ENCODE measurements at regions of chr17 and their contacts with region 1.

Region 1: DNA sequence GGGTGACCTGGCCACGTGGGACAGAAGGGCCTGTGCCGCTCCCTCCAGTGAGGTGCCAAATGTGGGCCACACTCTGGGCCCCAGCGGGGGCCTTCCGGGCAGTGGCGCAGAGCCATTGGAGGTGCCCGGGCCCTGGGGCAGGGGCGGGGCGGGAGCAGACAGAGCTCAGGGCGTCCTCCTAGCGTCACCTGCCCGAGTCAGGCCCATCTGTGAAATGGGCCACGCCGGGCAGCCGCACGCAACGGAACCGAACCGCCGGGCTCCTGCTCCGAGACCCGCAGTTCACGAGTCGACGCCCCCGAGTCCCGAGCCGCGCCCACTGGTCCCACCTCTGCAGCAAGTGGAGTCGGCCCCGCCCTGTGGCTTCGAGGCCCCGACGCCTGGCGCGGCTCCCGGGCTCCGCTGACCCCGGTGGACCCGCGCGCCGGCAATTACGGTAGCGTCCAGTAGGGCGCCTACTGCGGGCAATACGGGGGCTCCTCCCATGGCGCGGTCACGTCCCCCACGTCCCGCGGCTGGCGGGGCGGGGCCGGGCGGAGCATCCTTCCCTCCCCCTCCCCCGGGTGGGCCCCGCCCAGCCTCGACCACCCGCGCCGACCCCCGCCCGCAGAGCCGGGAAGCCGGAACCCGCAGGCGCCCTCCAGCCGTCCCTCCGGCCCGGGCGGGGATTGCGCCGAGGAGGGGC is 1.9 kb downstream of the SLC16A3 start:
- DNase-seq: peak; percentile 76
- H3K4me3 Mint-ChIP-seq: peak overlapping the region; percentile 91
- H3K27ac Mint-ChIP-seq: no peak overlapping the region
- H3K4me1 Mint-ChIP-seq: peaks cover 32% of the 10 kb centered on the region
- H3K27me3 Mint-ChIP-seq: no peaks in the 10 kb centered on the region

Region 2: GRCh38 chr17:82205719-82206508 is 24.9 kb before region 1 on chr17:
- CTCF ChIA-PET with region 1: interaction called, 11 read pairs
- POLR2A ChIA-PET with region 1: interaction called, 27 read pairs
- DNase-seq: peak; percentile 86
- H3K4me3 Mint-ChIP-seq: peak overlapping the region; percentile 31
- H3K27ac Mint-ChIP-seq: peak overlapping the region; percentile 92
- H3K4me1 Mint-ChIP-seq: peaks cover 46% of the 10 kb centered on the region
- H3K27me3 Mint-ChIP-seq: no peaks in the 10 kb centered on the region

Region 3: GRCh38 chr17:82212331-82213250 is 18.2 kb before region 1 on chr17 and contains the start of gene CCDC57:
- CTCF ChIA-PET with region 1: no interaction called
- POLR2A ChIA-PET with region 1: interaction called, 27 read pairs
- DNase-seq: peak; percentile 77
- H3K4me3 Mint-ChIP-seq: peak within 1 kb of the TSS; percentile 77
- H3K27ac Mint-ChIP-seq: peak within 1 kb of the TSS; percentile 52
- H3K4me1 Mint-ChIP-seq: peaks cover 43% of the 10 kb centered on the region
- H3K27me3 Mint-ChIP-seq: no peaks in the 10 kb centered on the region
- total RNA-seq, gene CCDC57: 49.8 to 54.9 TPM